Head of caudate nucleus (tissue), 42 donors: ENCODE measurements at regions of chr13 and their contacts with region 1.

Region 1: DNA sequence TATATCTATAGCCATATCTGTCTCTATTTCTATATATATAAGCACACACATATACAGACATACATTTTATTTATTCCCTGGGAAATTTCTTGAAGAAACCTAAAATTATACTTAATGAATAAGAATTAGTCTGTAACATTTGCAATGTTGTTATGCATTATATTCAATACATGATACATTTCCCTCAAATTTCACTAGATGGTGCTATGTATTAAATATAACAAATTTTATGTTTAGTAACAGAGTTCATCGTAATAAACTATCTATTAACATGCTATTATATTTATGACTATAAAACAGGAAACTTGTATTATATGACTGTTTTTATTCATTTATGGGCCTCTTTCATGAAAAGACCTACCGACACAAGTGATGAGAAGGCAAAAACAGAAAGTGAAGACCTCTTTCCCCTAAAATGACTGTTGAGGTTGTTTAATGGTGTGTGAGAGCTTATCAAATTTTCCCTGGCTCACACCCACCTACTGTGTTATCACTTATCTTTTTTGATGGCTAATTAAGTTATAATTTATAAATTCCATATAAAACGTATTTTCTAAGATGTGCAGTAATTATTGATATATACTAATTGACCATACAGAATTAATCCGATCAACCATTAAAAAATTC is 881.9 kb downstream of the SLITRK6 start:
- DNase-seq: no peak

Region 2: DNA sequence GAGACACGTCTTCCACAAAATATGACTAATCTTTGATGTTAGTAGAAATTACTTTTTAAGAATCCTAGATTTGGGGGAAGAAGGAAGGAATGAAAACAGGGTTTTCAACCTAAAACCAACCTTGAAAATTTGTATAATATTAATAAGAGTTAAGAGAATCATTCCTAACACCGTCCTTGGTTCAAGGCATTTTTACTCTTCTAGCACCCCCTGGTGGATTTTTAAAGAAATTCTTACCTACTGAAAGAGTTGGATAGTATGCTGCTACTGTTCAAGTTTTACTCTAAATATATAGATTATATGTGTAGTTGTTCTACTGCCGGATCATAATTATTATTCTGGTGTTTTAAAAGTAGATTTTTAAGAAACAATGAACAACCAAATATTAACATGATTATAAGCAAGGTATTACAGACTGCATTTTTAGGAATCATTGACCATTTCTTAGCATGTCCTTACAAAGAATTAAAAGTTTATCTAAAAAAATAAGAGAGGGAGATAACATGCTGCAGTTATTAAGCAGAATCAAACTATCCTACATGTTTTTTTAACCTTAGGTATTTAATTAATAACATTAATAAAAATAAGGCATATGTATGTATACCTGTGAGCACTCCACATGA is 889.3 kb after region 1 on chr13:
- intact Hi-C with region 1: loop called (anchors 5 kb)
- DNase-seq: peak in 3 of 42 donors; percentile 7 to 43 (median 9)